Ovary (tissue), 10 donors: ENCODE measurements at regions of chr5 and their contacts with region 1.

Region 1: DNA sequence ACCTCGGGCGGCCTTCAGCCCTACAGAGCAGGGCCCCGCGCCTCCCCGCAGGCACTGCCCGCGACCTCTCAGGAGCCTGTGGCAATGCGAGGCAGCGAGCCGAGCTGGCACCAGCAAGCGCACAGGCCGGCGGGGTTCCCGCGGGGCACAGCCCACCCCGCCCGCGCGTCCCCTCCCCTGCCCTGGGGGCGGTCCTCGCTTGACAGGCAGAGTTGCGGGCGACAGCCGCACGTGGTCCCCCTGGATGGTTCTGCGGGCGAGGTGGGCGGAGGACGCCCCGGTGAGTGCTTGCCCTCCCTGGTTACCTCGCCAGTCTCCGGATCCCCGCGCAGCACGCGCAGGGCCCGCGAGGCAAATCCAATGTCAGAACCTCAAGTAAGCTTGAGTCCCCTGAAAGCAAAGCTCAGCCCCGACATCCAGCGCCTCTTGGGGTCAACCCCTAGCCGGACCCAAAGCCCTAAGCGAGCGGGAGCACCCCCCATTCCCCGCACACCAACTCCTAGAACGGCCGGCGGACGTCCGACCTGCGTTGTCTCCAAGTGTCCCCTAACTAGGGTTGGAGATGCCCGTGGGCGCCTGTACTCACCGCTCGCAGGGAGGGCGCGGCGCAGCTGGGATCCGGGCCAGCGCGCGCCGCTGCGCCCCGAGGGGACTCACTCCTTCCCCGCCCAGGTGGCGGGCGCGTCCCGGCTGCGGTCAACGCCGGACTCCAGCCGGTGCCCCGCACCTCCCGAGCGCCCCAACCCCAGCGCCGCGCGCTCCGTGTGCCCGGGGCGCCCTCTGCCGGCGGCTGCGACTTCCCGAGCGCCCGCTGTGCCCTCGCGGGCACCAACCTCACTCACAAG is at the start of gene DRD1:
- DNase-seq: no peak
- H3K4me3 ChIP-seq: no peak within 1 kb of the TSS
- H3K27ac ChIP-seq: no peak within 1 kb of the TSS
- H3K4me1 ChIP-seq: no peaks in the 10 kb centered on the region
- H3K27me3 ChIP-seq: no peaks in the 10 kb centered on the region
- CTCF ChIP-seq: no peak
- EP300 ChIP-seq: no peak
- POLR2A ChIP-seq: no peak
- total RNA-seq, gene DRD1: 0.10 to 0.23 (median 0.15) TPM in 6 of 7 donors, not detected in the other

Region 2: GRCh38 chr5:174951146-174951780 is 493.0 kb before region 1 on chr5:
- intact Hi-C with region 1: loop called in 2 of 4 experiments (anchors 5 to 10 kb)
- DNase-seq: no peak
- H3K4me3 ChIP-seq: no peak overlapping the region
- H3K27ac ChIP-seq: no peak overlapping the region
- H3K4me1 ChIP-seq: no peaks in the 10 kb centered on the region
- H3K27me3 ChIP-seq: no peaks in the 10 kb centered on the region
- CTCF ChIP-seq: no peak
- EP300 ChIP-seq: no peak
- POLR2A ChIP-seq: no peak